ENCODE measurements at regions of chr1 and their contacts with region 1.

Region 1: DNA sequence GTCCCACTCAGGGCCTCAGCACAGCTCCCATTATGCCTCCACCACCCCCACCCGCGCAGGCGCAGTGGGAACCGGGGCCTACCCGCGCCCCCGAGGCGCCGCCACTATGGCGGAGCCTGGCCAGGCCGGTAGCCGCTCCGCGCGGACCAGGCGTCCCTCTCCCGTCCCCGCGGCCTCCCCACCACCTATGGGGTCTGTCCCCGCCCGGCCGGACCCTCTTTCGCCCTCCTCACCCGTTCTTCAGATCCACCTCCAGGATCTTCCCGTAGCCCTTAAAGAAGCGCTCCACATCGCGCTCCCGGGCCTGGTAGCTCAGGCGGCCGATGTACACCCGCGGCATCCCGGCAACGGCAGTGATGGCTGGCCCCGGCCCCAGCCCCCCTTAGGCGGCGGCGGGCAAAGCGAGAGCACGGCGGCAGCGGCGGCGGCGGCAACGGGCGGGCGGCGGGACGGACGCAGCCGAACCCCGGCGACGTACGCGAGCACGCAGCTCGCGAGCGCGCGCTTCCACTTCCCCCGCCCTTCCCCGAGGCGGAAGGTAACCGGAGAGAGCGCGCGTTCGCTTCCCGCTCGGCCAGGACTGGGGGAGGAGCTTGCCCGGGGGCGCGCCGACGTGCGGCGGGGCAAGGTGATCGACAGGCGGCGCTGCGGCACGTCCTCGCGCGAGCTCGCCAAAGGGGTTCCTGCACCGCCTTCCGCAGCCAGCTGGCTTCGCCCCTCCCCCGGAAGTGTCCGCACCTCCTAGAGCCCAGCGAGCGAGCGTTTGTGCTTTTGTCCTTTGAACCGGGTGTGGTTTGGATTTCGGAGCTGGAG is at the start of gene SRSF4:
- DNase-seq: peak; percentile 96 to 99 (median 99)
- ATAC-seq: peak; percentile 97
- H3K4me3 ChIP-seq: peak within 1 kb of the TSS; percentile 99
- H3K4me3 Mint-ChIP-seq: peak within 1 kb of the TSS; percentile 88 to 98 (median 94)
- H3K27ac ChIP-seq: peak within 1 kb of the TSS; percentile 98
- H3K27ac Mint-ChIP-seq: peak within 1 kb of the TSS; percentile 88 to 98 (median 94)
- H3K4me1 ChIP-seq: peaks cover 26 to 29% of the 10 kb centered on the region in 2 donors
- H3K4me1 Mint-ChIP-seq: peaks cover 32 to 56% (median 50%) of the 10 kb centered on the region in 7 donors
- H3K27me3 ChIP-seq: no peaks in the 10 kb centered on the region
- H3K27me3 Mint-ChIP-seq: no peaks in the 10 kb centered on the region
- total RNA-seq, gene SRSF4: 77.6 to 110 (median 79.9) TPM

Region 2: DNA sequence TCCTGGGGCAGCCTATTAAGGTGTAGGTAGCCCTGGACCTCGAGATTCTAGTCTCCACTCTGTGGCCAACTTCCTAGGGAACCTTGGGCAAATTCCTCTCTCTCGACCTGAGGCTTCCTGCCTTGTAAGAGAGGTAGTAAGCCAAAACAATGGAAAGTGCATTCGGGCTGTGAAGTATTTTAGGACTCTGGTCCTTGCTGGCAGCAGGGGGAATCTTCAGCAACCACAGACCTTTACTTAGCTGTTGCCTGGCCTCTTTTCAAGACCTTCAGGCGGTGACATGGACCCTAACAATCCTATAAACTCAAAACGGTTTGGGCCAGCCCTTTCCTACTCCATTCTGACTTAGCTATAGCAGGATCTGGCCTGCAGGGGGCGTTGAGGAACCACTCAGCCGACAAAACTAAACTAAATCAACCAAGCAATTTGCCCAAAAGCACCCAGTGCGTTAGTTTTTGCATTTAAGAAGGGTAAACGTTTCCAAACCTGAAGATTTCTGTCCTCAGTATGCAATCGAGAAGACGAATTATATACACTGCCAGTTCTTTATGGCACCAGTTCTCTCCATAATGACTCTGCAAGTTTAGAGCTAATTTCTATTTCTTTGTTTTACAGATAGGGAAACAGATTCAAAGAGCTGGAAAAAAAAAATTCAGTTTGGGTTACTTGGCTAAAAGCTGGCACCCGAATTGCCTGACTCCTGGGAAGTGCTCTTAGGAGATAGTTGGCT is 933.2 kb before region 1 on chr1:
- CTCF ChIA-PET with region 1: no interaction called
- POLR2A ChIA-PET with region 1: no interaction called
- intact Hi-C with region 1: loop called (anchors 5 kb)
- DNase-seq: peak; percentile 67 to 86 (median 80)
- ATAC-seq: peak; percentile 36
- H3K4me3 ChIP-seq: peak overlapping the region; percentile 75
- H3K4me3 Mint-ChIP-seq: peak overlapping the region; percentile 80 to 99 (median 90)
- H3K27ac ChIP-seq: peak overlapping the region; percentile 95
- H3K27ac Mint-ChIP-seq: peak overlapping the region; percentile 90 to 100 (median 94)
- H3K4me1 ChIP-seq: peaks cover 46 to 52% of the 10 kb centered on the region in 2 donors
- H3K4me1 Mint-ChIP-seq: peaks cover 38 to 52% (median 49%) of the 10 kb centered on the region in 7 donors
- H3K27me3 ChIP-seq: no peaks in the 10 kb centered on the region
- H3K27me3 Mint-ChIP-seq: no peaks in the 10 kb centered on the region

Region 3: GRCh38 chr1:28642847-28643635 is 538.6 kb before region 1 on chr1 and contains the start of gene TAF12:
- CTCF ChIA-PET with region 1: no interaction called
- POLR2A ChIA-PET with region 1: interaction called, 21 read pairs
- intact Hi-C with region 1: loop called (anchors 1 kb)
- DNase-seq: peak; percentile 81 to 92 (median 86)
- ATAC-seq: peak; percentile 91
- H3K4me3 ChIP-seq: peak within 1 kb of the TSS; percentile 93
- H3K4me3 Mint-ChIP-seq: peak within 1 kb of the TSS; percentile 94 to 100 (median 98)
- H3K27ac ChIP-seq: peak within 1 kb of the TSS; percentile 95
- H3K27ac Mint-ChIP-seq: peak within 1 kb of the TSS; percentile 93 to 99 (median 99)
- H3K4me1 ChIP-seq: peaks cover 26 to 35% of the 10 kb centered on the region in 2 donors
- H3K4me1 Mint-ChIP-seq: peaks cover 30 to 65% (median 55%) of the 10 kb centered on the region in 7 donors
- H3K27me3 ChIP-seq: no peaks in the 10 kb centered on the region
- H3K27me3 Mint-ChIP-seq: peaks cover 0 to 2% (median 0%) of the 10 kb centered on the region in 5 donors
- total RNA-seq, gene TAF12: 13.0 to 34.6 (median 19.3) TPM

Region 4: DNA sequence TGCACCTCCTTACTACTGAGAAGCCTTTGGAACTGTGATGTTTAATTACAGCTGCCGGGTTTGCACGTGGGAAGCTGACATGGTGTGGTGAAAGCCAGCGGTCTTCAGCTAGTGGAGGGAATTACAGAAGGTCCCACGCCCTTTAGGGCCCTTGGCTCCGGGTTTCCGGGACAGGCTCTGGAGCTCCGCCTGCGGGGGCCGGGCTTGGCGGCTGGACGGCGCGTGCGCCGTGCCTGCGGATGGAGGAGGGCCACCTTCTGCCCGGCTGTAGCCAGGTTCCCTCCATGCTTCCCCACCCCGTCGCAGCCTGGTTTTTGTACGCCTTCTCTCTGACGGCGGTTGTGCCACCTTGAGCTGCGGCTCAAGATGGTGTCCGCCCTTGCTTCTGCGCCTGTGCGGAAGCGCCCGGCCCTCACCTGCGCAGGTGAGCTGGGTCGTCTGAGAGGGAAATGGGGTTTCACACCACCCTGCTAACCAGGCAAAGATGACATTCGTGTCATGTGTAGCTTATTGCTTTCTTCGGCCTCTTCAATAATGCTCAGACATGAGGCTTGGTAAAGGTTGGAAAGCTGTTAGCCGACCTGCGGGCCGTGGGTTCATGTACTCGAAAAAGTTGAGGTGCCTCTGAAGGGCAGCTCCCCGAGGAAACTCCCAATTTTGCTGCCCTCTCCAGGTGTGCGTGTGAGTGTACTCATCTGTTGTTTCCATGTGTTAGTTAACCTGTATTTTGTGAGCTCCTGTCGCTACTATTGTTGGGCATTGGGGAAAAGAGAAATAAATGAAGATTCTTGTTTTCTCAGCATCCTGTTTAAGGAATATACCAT is 406.3 kb before region 1 on chr1:
- CTCF ChIA-PET with region 1: interaction called, 3 read pairs
- POLR2A ChIA-PET with region 1: interaction called, 10 read pairs
- intact Hi-C with region 1: loop called in 1 of 2 experiments (anchors 10 kb)
- DNase-seq: peak; percentile 52 to 77 (median 68)
- ATAC-seq: peak; percentile 91
- H3K4me3 ChIP-seq: peak overlapping the region; percentile 63
- H3K4me3 Mint-ChIP-seq: peak overlapping the region; percentile 79 to 88 (median 84)
- H3K27ac ChIP-seq: peak overlapping the region; percentile 52
- H3K27ac Mint-ChIP-seq: peak overlapping the region; percentile 23 to 94 (median 87)
- H3K4me1 ChIP-seq: peaks cover 6 to 8% of the 10 kb centered on the region in 2 donors
- H3K4me1 Mint-ChIP-seq: peaks cover 0 to 14% (median 12%) of the 10 kb centered on the region in 7 donors
- H3K27me3 ChIP-seq: no peaks in the 10 kb centered on the region
- H3K27me3 Mint-ChIP-seq: peaks cover 0 to 5% (median 0%) of the 10 kb centered on the region in 5 donors

Region 5: DNA sequence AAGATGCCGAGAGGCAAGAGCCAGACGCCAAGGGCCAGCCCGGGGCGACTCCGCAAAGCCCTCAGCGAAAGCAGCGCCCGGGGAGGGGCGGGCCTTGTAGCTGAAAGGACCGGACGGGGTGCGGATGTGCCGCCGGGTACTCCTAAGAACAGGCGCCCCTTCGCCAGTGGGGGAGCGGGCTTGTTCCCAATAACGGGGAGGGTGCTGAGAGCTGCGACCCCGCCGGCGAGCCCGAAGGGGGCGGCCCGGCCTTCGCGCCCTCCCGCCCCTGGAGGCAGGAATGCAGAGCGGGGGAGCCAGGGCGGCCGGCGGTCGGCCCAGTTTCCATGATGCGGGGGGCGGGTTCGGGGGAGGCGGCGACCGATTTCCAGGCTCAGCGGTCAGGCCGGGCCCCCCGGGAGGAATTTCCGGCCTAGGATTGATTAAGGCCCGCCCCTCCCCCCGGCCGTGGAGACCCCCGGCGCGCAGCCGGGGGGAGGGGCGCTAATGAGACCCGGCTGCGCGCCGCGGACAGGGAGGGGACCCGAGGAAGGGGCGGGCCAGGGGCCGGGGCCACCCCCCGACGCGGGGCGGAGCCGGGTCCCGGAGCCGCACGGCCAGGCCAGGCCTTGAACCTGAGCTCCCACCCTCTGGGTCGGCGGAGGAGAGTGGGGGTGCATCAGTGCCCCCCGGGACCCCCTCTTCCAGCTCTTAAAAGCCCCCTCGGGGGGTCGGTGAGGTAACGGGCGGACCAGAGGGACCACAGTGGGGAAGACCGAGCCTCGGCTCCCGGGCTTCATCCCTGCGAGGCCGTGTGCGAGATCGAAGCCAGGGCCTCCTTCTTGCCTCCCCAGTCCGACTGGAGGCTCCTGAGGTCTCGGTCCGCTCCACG is 57.0 kb before region 1 on chr1:
- CTCF ChIA-PET with region 1: no interaction called
- POLR2A ChIA-PET with region 1: interaction called, 4 read pairs
- intact Hi-C with region 1: loop called (anchors 1 to 5 kb)
- DNase-seq: peak; percentile 27 to 71 (median 46)
- ATAC-seq: peak; percentile 46
- H3K4me3 ChIP-seq: peak overlapping the region; percentile 48
- H3K4me3 Mint-ChIP-seq: peak overlapping the region; percentile 27 to 94 (median 74)
- H3K27ac ChIP-seq: no peak overlapping the region
- H3K27ac Mint-ChIP-seq: no peak overlapping the region
- H3K4me1 ChIP-seq: peaks cover 6 to 11% of the 10 kb centered on the region in 2 donors
- H3K4me1 Mint-ChIP-seq: peaks cover 3 to 14% (median 9%) of the 10 kb centered on the region in 7 donors
- H3K27me3 ChIP-seq: peaks cover 0 to 12% of the 10 kb centered on the region in 2 donors
- H3K27me3 Mint-ChIP-seq: peaks cover 9 to 41% (median 13%) of the 10 kb centered on the region in 5 donors

Region 6: GRCh38 chr1:29202584-29203340 is 21.1 kb after region 1 on chr1:
- CTCF ChIA-PET with region 1: interaction called, 46 read pairs
- POLR2A ChIA-PET with region 1: interaction called, 15 read pairs
- intact Hi-C with region 1: loop called (anchors 1 to 2 kb)
- DNase-seq: peak; percentile 58 to 91 (median 76)
- ATAC-seq: peak; percentile 94
- H3K4me3 ChIP-seq: no peak overlapping the region
- H3K4me3 Mint-ChIP-seq: no peak overlapping the region
- H3K27ac ChIP-seq: no peak overlapping the region
- H3K27ac Mint-ChIP-seq: no peak overlapping the region
- H3K4me1 ChIP-seq: no peaks in the 10 kb centered on the region
- H3K4me1 Mint-ChIP-seq: peaks cover 0 to 13% (median 3%) of the 10 kb centered on the region in 7 donors
- H3K27me3 ChIP-seq: no peaks in the 10 kb centered on the region
- H3K27me3 Mint-ChIP-seq: no peaks in the 10 kb centered on the region